ENCODE measurements at regions of chr1 and their contacts with region 1.

Region 1: GRCh38 chr1:99849744-99850458 is at the start of gene AGL:
- DNase-seq: peak; percentile 92
- ATAC-seq: peak; percentile 96
- H3K4me3 ChIP-seq: peak within 1 kb of the TSS; percentile 67 to 89 (median 77)
- H3K4me3 Mint-ChIP-seq: peak within 1 kb of the TSS; percentile 98
- H3K27ac ChIP-seq: peak within 1 kb of the TSS; percentile 71 to 84
- H3K27ac Mint-ChIP-seq: peak within 1 kb of the TSS; percentile 82
- H3K4me1 ChIP-seq: peaks cover 15 to 19% of the 10 kb centered on the region in 2 donors
- H3K4me1 Mint-ChIP-seq: peaks cover 25% of the 10 kb centered on the region
- H3K27me3 ChIP-seq: no peaks in the 10 kb centered on the region
- H3K27me3 Mint-ChIP-seq: no peaks in the 10 kb centered on the region
- CTCF ChIP-seq: no peak
- total RNA-seq, gene AGL: 18.7 and 21.7 TPM in 2 replicates

Region 2: DNA sequence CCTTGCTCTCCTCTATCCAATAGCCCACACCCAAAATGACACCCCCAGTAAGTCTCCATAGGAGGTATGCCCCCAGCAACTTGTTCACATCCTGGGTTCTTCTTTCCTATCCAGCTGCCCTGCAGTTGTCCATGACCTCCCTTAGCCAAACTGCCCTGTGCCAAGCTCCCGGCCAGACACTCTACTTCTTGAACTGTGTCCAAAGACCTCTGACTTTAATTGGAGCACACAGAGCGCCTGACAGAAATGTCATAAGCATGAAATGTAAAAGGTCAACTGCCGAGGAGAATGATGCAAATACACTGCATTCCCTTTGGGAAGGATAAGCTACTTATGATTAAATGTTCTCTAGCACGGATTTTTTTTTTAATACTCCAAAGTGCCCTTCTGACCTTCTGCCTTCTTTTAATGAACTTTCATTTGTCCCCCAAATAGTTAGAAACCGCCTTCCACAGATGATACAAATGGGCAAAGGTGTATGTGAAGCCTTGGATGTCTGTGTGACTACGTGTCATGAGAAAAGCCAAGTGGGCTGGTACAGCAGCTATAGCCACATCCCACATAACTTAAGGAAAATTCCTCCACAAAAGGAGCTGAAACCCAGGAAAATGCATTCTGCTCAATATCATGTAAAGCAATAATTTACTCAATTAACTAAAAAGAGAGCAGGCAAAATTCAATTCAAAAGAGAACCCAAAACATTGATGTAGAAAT is 177.2 kb before region 1 on chr1:
- CTCF ChIA-PET with region 1: no interaction called
- POLR2A ChIA-PET with region 1: no interaction called
- intact Hi-C with region 1: no loop called
- DNase-seq: no peak
- ATAC-seq: no peak
- H3K4me3 ChIP-seq: no peak overlapping the region
- H3K4me3 Mint-ChIP-seq: no peak overlapping the region
- H3K27ac ChIP-seq: no peak overlapping the region
- H3K27ac Mint-ChIP-seq: no peak overlapping the region
- H3K4me1 ChIP-seq: no peaks in the 10 kb centered on the region
- H3K4me1 Mint-ChIP-seq: no peaks in the 10 kb centered on the region
- H3K27me3 ChIP-seq: peaks cover 0 to 7% (median 3%) of the 10 kb centered on the region in 4 experiments
- H3K27me3 Mint-ChIP-seq: peaks cover 27% of the 10 kb centered on the region
- CTCF ChIP-seq: no peak

Region 3: GRCh38 chr1:99808391-99809115 is 41.3 kb before region 1 on chr1:
- CTCF ChIA-PET with region 1: no interaction called
- POLR2A ChIA-PET with region 1: no interaction called
- intact Hi-C with region 1: loop called (anchors 5 kb)
- DNase-seq: peak; percentile 78
- ATAC-seq: peak; percentile 56
- H3K4me3 ChIP-seq: no peak overlapping the region
- H3K4me3 Mint-ChIP-seq: no peak overlapping the region
- H3K27ac ChIP-seq: no peak overlapping the region
- H3K27ac Mint-ChIP-seq: no peak overlapping the region
- H3K4me1 ChIP-seq: peaks cover 0 to 6% of the 10 kb centered on the region in 2 donors
- H3K4me1 Mint-ChIP-seq: peaks cover 4% of the 10 kb centered on the region
- H3K27me3 ChIP-seq: peaks cover 0 to 4% (median 2%) of the 10 kb centered on the region in 4 experiments
- H3K27me3 Mint-ChIP-seq: peaks cover 31% of the 10 kb centered on the region
- CTCF ChIP-seq: peak; percentile 85

Region 4: GRCh38 chr1:99969729-99970621 is 120.1 kb after region 1 on chr1 and contains the start of gene SLC35A3:
- CTCF ChIA-PET with region 1: no interaction called
- POLR2A ChIA-PET with region 1: no interaction called
- intact Hi-C with region 1: loop called (anchors 1 kb)
- DNase-seq: peak; percentile 82
- ATAC-seq: peak; percentile 75
- H3K4me3 ChIP-seq: peak within 1 kb of the TSS; percentile 66 to 89 (median 82)
- H3K4me3 Mint-ChIP-seq: peak within 1 kb of the TSS; percentile 100
- H3K27ac ChIP-seq: peak within 1 kb of the TSS; percentile 54 to 84
- H3K27ac Mint-ChIP-seq: peak within 1 kb of the TSS; percentile 95
- H3K4me1 ChIP-seq: peaks cover 10% of the 10 kb centered on the region in 2 donors
- H3K4me1 Mint-ChIP-seq: peaks cover 31% of the 10 kb centered on the region
- H3K27me3 ChIP-seq: no peaks in the 10 kb centered on the region
- H3K27me3 Mint-ChIP-seq: no peaks in the 10 kb centered on the region
- CTCF ChIP-seq: no peak
- total RNA-seq, gene SLC35A3: 30.2 and 31.0 TPM in 2 replicates

Region 5: DNA sequence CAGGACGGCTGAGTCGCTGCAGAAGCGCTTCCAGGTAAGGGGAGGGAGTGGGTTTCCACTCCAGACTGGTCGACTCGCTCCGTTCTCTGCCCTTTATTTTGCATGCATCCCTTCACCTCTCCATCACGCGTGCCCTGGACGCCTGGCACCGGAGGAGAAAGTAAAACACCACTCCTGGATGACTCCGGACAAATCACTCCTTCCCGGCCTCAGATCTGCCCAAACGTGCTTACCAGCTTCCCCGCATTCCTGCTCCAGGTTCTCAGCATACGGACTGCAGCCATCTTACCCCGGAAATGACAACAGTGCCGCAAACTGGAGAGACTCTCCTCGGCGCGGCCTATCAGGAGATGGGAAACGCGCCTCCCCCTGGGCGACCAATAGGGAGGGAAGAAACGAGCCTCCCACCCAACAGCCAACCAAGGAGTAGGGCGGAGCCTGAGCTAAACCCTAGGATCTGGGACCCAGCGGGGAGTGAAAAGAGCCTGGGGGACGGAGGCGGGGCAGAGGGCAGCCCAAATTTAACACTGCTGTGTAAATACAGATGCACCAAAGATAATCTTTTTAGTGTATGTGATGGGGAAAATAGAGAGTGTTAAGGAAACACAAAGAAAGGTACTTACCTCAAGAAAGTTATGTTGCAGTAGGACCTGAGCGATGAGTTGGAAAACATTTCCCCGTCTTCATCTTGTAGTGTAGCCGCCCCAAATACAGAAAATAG is 399.8 kb after region 1 on chr1 and contains the start of gene DBT:
- CTCF ChIA-PET with region 1: no interaction called
- POLR2A ChIA-PET with region 1: no interaction called
- intact Hi-C with region 1: loop called (anchors 10 kb)
- DNase-seq: peak; percentile 90
- ATAC-seq: peak; percentile 100
- H3K4me3 ChIP-seq: peak within 1 kb of the TSS; percentile 61 to 99 (median 90)
- H3K4me3 Mint-ChIP-seq: no peak within 1 kb of the TSS
- H3K27ac ChIP-seq: peak within 1 kb of the TSS; percentile 68 to 69
- H3K27ac Mint-ChIP-seq: no peak within 1 kb of the TSS
- H3K4me1 ChIP-seq: peaks cover 12 to 15% of the 10 kb centered on the region in 2 donors
- H3K4me1 Mint-ChIP-seq: peaks cover 13% of the 10 kb centered on the region
- H3K27me3 ChIP-seq: no peaks in the 10 kb centered on the region
- H3K27me3 Mint-ChIP-seq: no peaks in the 10 kb centered on the region
- CTCF ChIP-seq: no peak
- total RNA-seq, gene DBT: 12.9 and 15.1 TPM in 2 replicates

Region 6: DNA sequence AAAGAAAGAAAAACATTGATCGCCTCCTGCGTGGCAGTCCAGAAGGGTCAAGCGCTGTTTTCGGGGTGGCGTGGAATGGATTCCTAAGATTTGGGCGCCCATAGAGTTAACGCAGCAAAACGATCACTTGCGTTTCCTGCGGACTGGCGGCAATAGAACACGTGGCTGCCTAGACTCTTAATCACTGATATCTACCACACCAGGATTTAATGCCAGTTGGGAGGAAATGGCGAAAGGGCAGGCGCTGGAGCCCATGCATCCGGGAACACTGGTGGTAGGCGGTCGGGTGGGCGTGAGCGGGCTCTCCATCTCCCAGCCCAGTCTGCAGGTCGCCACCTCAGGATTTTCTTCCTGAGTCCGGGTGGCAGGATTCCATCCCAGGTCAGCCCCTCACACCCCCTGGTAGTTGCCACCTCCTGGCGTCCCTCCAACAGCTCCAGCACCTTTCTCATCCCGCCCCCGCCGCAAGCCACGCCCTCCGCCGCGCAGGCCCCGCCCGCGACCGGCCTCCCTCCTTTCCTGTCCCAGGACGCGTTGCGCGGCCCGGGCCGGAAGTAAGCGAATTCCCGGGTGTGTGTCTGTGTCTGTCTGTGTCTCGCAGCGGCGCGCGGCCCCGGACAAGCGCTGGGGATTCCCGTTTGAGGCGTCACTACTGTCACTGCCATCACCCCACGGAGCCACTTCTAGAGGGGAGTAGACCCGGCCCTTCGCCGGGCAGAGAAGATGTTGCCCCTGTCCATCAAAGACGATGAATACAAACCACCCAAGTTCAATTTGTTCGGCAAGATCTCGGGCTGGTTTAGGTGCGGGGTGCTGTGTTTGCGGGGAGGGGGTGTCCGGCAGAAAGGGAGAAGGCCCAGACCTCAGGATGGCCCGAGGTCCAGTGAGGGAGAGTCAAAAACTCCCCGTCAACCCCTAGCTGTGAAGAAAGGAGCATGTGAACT is 1045.9 kb after region 1 on chr1 and contains the start of gene SLC30A7:
- CTCF ChIA-PET with region 1: no interaction called
- POLR2A ChIA-PET with region 1: no interaction called
- intact Hi-C with region 1: loop called (anchors 2 kb)
- DNase-seq: peak; percentile 95
- ATAC-seq: peak; percentile 87
- H3K4me3 ChIP-seq: peak within 1 kb of the TSS; percentile 75 to 99 (median 98)
- H3K4me3 Mint-ChIP-seq: peak within 1 kb of the TSS; percentile 94
- H3K27ac ChIP-seq: peak within 1 kb of the TSS; percentile 85 to 97
- H3K27ac Mint-ChIP-seq: peak within 1 kb of the TSS; percentile 94
- H3K4me1 ChIP-seq: peaks cover 10 to 11% of the 10 kb centered on the region in 2 donors
- H3K4me1 Mint-ChIP-seq: peaks cover 32% of the 10 kb centered on the region
- H3K27me3 ChIP-seq: no peaks in the 10 kb centered on the region
- H3K27me3 Mint-ChIP-seq: no peaks in the 10 kb centered on the region
- CTCF ChIP-seq: no peak
- total RNA-seq, gene SLC30A7: 26.7 and 28.6 TPM in 2 replicates

Measured in B cell (primary cell).